Breast epithelium (tissue), 4 donors: ENCODE measurements at regions of chr20 and their contacts with region 1.

Region 1: GRCh38 chr20:25294459-25295385 is 46.8 kb downstream of the PYGB start:
- DNase-seq: no peak
- H3K4me3 ChIP-seq: no peak overlapping the region
- H3K27ac ChIP-seq: peak overlapping the region; percentile 45 to 79
- H3K4me1 ChIP-seq: peaks cover 0 to 6% of the 10 kb centered on the region in 2 donors
- H3K27me3 ChIP-seq: no peaks in the 10 kb centered on the region
- CTCF ChIP-seq: peak in 1 of 3 donors; percentile 32
- POLR2A ChIP-seq: no peak

Region 2: GRCh38 chr20:24992487-24993205 is 302.1 kb before region 1 on chr20 and contains the start of gene APMAP:
- intact Hi-C with region 1: loop called (anchors 5 kb)
- DNase-seq: peak; percentile 93 to 96
- H3K4me3 ChIP-seq: peak within 1 kb of the TSS; percentile 79 to 85 (median 85)
- H3K27ac ChIP-seq: peak within 1 kb of the TSS; percentile 96 to 97
- H3K4me1 ChIP-seq: peaks cover 3 to 15% of the 10 kb centered on the region in 2 donors
- H3K27me3 ChIP-seq: no peaks in the 10 kb centered on the region
- CTCF ChIP-seq: no peak
- POLR2A ChIP-seq: peak; percentile 97
- total RNA-seq, gene APMAP: 83.2 to 184 (median 101) TPM

Region 3: DNA sequence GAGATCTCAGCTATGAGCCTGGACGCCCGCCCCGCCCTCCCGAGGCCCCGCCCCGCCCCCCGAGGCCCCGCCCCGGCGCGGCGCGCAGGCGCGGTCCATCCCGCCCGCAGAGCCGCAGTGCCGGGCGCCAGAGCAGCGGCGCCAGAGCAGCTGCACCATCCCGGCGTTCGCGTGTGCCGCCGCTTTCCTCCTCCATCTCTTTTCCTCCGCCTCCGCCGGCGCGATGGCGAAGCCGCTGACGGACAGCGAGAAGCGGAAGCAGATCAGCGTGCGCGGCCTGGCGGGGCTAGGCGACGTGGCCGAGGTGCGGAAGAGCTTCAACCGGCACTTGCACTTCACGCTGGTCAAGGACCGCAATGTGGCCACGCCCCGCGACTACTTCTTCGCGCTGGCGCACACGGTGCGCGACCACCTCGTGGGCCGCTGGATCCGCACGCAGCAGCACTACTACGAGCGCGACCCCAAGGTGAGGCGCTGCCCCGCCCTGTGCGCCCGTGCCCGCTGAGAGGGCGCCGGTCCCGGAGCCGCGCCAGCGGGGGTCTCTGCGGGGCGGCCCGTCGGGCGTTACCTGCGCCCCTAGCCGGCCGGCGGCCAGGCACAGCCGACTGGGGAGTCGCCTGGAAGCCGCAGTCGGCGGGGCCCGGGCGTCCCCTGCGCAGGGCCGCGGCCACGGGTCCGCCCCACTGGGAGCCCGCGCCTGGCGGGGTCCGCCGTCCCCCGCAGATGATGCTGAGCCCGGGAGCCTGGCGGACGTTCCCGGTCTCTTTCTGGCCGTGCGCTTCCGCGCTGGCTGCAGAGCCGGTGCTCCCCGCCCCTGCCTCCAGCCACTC is 46.6 kb before region 1 on chr20 and contains the start of gene PYGB:
- intact Hi-C with region 1: no loop called
- DNase-seq: peak; percentile 23 to 69
- H3K4me3 ChIP-seq: peak within 1 kb of the TSS; percentile 85 to 99 (median 94)
- H3K27ac ChIP-seq: peak within 1 kb of the TSS; percentile 92 to 95
- H3K4me1 ChIP-seq: no peaks in the 10 kb centered on the region
- H3K27me3 ChIP-seq: no peaks in the 10 kb centered on the region
- CTCF ChIP-seq: peak in 1 of 3 donors; percentile 17
- POLR2A ChIP-seq: peak; percentile 81
- total RNA-seq, gene PYGB: 95.7 to 128 (median 121) TPM

Region 4: DNA sequence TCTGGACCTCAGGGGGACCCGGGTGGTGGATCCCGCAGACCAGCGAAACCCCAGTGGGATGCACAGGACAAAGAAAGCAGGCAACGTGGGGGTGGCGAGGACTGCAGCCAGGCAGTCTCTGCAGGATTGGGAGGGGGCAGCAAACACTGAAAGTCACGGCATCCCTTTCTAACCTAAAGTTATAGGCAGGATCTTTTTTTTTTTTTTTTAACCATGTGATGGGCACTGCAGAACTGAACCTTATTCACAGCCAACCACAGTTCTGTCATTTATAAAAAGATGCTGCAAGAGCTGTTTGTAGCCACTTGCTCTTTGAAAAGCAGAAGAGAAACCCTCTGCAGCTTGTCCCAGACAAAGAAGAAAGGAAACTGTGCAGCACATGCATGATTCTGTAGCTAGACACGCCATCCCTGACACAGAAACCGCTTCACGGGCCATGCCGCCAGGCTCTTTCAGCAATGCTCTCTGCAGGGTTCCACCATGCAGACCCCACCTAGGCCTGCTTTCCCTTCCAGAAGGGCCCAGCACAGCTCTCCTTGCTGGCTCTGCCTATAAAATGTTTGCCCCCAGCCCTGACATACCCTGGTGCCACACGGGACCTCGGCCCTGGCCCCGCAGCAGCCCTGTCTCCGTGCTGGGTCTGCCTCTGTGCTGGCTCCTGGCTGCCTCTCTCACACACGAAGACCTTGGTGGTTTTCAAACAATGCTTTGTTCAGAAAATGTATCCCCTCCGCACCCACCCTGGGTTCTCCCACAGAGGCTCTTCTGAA is 23.9 kb after region 1 on chr20:
- intact Hi-C with region 1: no loop called
- DNase-seq: no peak
- H3K4me3 ChIP-seq: no peak overlapping the region
- H3K27ac ChIP-seq: no peak overlapping the region
- H3K4me1 ChIP-seq: no peaks in the 10 kb centered on the region
- H3K27me3 ChIP-seq: no peaks in the 10 kb centered on the region
- CTCF ChIP-seq: no peak
- POLR2A ChIP-seq: no peak

Region 5: GRCh38 chr20:25390538-25391528 is 96.1 kb after region 1 on chr20 and contains the start of gene ABHD12:
- intact Hi-C with region 1: loop called (anchors 10 kb)
- DNase-seq: peak; percentile 93 to 95
- H3K4me3 ChIP-seq: peak within 1 kb of the TSS; percentile 81 to 98 (median 89)
- H3K27ac ChIP-seq: peak within 1 kb of the TSS; percentile 88 to 93
- H3K4me1 ChIP-seq: no peaks in the 10 kb centered on the region
- H3K27me3 ChIP-seq: no peaks in the 10 kb centered on the region
- CTCF ChIP-seq: no peak
- POLR2A ChIP-seq: no peak
- total RNA-seq, gene ABHD12: 26.9 to 67.7 (median 53.4) TPM